ENCODE measurements at regions of chr1 and their contacts with region 1.

Region 1: DNA sequence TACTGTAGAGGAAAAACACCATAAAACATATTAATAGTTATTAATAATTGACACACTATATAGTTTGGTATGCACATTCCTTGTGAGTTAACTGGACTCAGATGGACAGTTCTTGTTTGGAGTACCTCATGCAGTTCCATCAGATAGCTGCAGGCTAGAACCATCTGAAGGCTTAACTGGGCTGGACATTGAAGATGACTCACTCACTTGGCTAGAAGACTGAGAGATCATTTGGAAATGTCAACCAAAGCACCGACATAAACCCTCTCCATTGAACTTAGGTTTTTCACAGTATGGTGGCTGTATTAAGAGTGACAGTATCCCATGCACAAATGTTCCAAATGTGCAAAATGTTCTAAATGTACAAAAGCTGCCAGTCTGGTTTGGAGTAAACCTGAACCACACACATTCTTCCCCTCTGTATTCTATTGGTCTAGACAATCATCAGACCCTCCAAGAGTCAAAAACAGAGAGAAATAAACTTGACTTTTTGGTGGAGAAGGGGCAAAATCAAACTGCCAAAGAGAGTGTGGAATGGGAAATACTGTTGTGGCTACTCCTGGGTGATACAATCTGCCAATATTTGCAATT is 708.4 kb downstream of the KCNT2 start:
- DNase-seq: no peak
- CTCF ChIP-seq: no peak

Region 2: GRCh38 chr1:195886000-195886399 is 13.9 kb before region 1 on chr1:
- CTCF ChIA-PET with region 1: interaction called, 15 read pairs
- POLR2A ChIA-PET with region 1: no interaction called
- DNase-seq: no peak
- CTCF ChIP-seq: peak; percentile 4